Naive thymus-derived CD4-positive, alpha-beta T cell (primary cell): ENCODE measurements at regions of chr2 and their contacts with region 1.

Region 1: GRCh38 chr2:224650815-224651439 is 65.2 kb downstream of the CCDC195 start:
- DNase-seq: peak in 7 of 9 donors; percentile 12 to 57 (median 47)
- ATAC-seq: peak; percentile 72
- H3K4me3 ChIP-seq: no peak overlapping the region
- H3K4me3 Mint-ChIP-seq: no peak overlapping the region
- H3K27ac ChIP-seq: no peak overlapping the region
- H3K27ac Mint-ChIP-seq: no peak overlapping the region
- H3K4me1 ChIP-seq: no peaks in the 10 kb centered on the region
- H3K4me1 Mint-ChIP-seq: peaks cover 0 to 11% (median 5%) of the 10 kb centered on the region in 7 donors
- H3K27me3 ChIP-seq: no peaks in the 10 kb centered on the region
- H3K27me3 Mint-ChIP-seq: peaks cover 0 to 7% (median 0%) of the 10 kb centered on the region in 5 donors

Region 2: DNA sequence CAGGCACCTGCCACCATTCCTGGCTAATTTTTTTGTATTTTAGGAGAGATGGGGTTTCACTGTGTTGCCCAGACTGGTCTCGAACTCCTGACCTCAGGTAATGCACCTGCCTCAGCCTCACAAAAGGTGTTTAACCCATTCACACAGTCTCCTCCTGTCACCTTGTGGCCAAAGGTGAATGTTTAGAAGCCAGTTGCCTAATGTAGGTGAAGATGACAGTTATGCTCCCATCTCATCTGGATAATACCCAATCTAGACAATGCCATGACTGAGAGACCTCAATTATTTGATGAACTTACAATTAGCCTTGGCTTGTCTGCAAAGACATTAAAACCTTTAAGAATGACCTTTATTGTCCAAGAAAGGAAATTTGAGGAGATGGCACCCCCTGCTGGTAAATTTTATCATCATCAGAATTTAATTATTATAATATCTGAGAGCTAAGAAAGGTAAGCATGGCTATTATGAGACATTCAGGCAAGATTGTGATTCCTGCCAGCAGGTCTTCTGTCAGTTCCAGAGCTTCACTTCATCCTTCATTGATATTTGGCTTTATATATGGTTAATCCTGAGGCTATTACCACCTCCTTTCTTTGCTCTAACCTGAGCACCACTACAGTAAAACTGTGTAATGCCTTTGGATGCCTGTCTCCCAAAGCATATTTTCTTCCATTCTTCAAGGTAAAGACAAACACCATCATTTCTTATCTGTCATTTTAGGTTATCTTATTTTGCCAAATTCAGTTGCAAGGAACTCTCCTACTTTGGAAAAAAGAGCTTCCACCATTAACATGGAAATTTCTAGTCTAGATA is 366.6 kb before region 1 on chr2:
- CTCF ChIA-PET with region 1: no interaction called
- POLR2A ChIA-PET with region 1: no interaction called
- intact Hi-C with region 1: loop called in 1 of 2 experiments (anchors 1 kb)
- DNase-seq: peak in 6 of 9 donors; percentile 8 to 46 (median 42)
- ATAC-seq: peak; percentile 29
- H3K4me3 ChIP-seq: no peak overlapping the region
- H3K4me3 Mint-ChIP-seq: no peak overlapping the region
- H3K27ac ChIP-seq: no peak overlapping the region
- H3K27ac Mint-ChIP-seq: no peak overlapping the region
- H3K4me1 ChIP-seq: no peaks in the 10 kb centered on the region
- H3K4me1 Mint-ChIP-seq: no peaks in the 10 kb centered on the region
- H3K27me3 ChIP-seq: no peaks in the 10 kb centered on the region
- H3K27me3 Mint-ChIP-seq: peaks cover 32 to 39% (median 37%) of the 10 kb centered on the region in 5 donors

Region 3: GRCh38 chr2:224369028-224369632 is 281.8 kb before region 1 on chr2:
- CTCF ChIA-PET with region 1: interaction called, 15 read pairs
- POLR2A ChIA-PET with region 1: no interaction called
- intact Hi-C with region 1: no loop called
- DNase-seq: peak in 7 of 9 donors; percentile 7 to 38 (median 25)
- ATAC-seq: peak; percentile 61
- H3K4me3 ChIP-seq: no peak overlapping the region
- H3K4me3 Mint-ChIP-seq: no peak overlapping the region
- H3K27ac ChIP-seq: no peak overlapping the region
- H3K27ac Mint-ChIP-seq: no peak overlapping the region
- H3K4me1 ChIP-seq: no peaks in the 10 kb centered on the region
- H3K4me1 Mint-ChIP-seq: peaks cover 0 to 4% (median 0%) of the 10 kb centered on the region in 7 donors
- H3K27me3 ChIP-seq: peaks cover 0 to under 1% of the 10 kb centered on the region in 2 donors
- H3K27me3 Mint-ChIP-seq: peaks cover 0 to 8% (median 3%) of the 10 kb centered on the region in 5 donors

Region 4: GRCh38 chr2:224472137-224472536 is 178.8 kb before region 1 on chr2:
- CTCF ChIA-PET with region 1: no interaction called
- POLR2A ChIA-PET with region 1: no interaction called
- intact Hi-C with region 1: loop called in 1 of 2 experiments (anchors 5 kb)
- DNase-seq: no peak
- ATAC-seq: no peak
- H3K4me3 ChIP-seq: no peak overlapping the region
- H3K4me3 Mint-ChIP-seq: no peak overlapping the region
- H3K27ac ChIP-seq: no peak overlapping the region
- H3K27ac Mint-ChIP-seq: peak overlapping the region in 3 of 9 donors; percentile 2 to 52 (median 14)
- H3K4me1 ChIP-seq: no peaks in the 10 kb centered on the region
- H3K4me1 Mint-ChIP-seq: peaks cover 0 to 4% (median 0%) of the 10 kb centered on the region in 7 donors
- H3K27me3 ChIP-seq: no peaks in the 10 kb centered on the region
- H3K27me3 Mint-ChIP-seq: no peaks in the 10 kb centered on the region

Region 5: DNA sequence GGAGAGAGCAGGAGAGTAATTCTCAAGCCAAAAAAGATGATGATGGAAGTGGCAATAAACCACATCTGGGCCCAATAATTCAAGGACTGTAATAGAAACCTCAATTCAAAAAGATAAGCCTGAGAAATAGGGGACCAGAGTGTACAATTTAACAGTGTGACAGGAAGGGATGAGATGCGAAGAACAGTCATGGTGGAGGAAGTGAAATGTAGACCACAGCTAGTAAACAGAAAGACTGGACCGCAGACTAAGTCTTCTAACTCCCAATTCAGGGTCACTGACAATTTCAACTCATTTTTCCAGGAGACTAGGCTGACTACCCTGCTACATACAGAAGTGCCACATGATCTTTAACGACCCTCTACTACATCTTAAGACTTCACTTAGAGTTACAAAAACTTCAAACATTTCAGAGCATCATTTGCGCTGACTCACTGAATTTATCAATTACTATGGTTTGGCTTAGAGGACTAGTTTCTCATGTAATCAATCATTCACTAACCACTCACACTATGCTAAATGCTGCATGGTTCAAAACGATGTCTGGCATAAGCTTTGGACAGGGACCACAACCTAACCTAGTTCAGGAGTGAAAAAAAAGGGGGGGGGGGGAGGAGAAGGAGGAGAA is 74.7 kb before region 1 on chr2:
- CTCF ChIA-PET with region 1: interaction called, 3 read pairs
- POLR2A ChIA-PET with region 1: no interaction called
- intact Hi-C with region 1: loop called in 1 of 2 experiments (anchors 2 kb)
- DNase-seq: no peak
- ATAC-seq: peak; percentile 47
- H3K4me3 ChIP-seq: peak overlapping the region; percentile 5
- H3K4me3 Mint-ChIP-seq: peak overlapping the region; percentile 22 to 85 (median 72)
- H3K27ac ChIP-seq: no peak overlapping the region
- H3K27ac Mint-ChIP-seq: peak overlapping the region in 6 of 9 donors; percentile 0 to 56 (median 17)
- H3K4me1 ChIP-seq: peaks cover 69 to 70% of the 10 kb centered on the region in 2 donors
- H3K4me1 Mint-ChIP-seq: peaks cover 56 to 99% (median 95%) of the 10 kb centered on the region in 7 donors
- H3K27me3 ChIP-seq: no peaks in the 10 kb centered on the region
- H3K27me3 Mint-ChIP-seq: no peaks in the 10 kb centered on the region

Region 6: GRCh38 chr2:224778474-224778877 is 127.5 kb after region 1 on chr2:
- CTCF ChIA-PET with region 1: no interaction called
- POLR2A ChIA-PET with region 1: no interaction called
- intact Hi-C with region 1: loop called in 1 of 2 experiments (anchors 2 kb)
- DNase-seq: peak; percentile 18 to 68 (median 58)
- ATAC-seq: peak; percentile 80
- H3K4me3 ChIP-seq: no peak overlapping the region
- H3K4me3 Mint-ChIP-seq: no peak overlapping the region
- H3K27ac ChIP-seq: no peak overlapping the region
- H3K27ac Mint-ChIP-seq: peak overlapping the region in 5 of 9 donors; percentile 10 to 54 (median 43)
- H3K4me1 ChIP-seq: no peaks in the 10 kb centered on the region
- H3K4me1 Mint-ChIP-seq: peaks cover 0 to 22% (median 11%) of the 10 kb centered on the region in 7 donors
- H3K27me3 ChIP-seq: no peaks in the 10 kb centered on the region
- H3K27me3 Mint-ChIP-seq: no peaks in the 10 kb centered on the region